MCF 10A (cell line): ENCODE measurements at regions of chr20 and their contacts with region 1.

Region 1: DNA sequence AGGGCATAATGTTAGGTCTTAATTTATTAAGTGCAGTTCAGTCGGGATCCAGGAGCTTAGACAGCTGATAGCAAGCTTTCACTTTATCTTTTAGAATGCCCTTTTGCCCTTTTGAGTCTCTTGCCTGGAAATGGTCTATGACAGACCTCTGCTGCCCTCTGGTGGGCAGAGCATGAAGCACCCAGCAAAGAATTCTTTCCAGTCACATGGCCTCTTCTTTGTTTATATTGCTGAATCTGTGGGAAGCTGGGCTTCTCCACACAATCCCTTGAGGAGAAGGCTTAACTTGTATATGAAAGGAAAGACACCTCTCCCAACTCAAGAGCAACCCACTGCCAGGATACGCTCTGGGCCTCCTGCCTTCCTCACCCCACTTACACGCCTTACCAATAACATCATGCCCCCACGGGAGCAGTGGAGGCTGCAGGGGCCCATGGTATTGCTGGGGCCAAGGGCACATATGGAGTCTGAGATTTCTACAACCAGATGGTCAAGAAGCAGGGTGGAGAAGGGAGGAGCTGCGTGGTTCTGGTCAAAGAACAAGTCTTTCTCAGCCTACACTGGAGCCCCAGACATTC is 20.4 kb downstream of the WFDC3 start:
- DNase-seq: peak; percentile 83
- H3K4me3 Mint-ChIP-seq: no peak overlapping the region
- H3K27ac Mint-ChIP-seq: no peak overlapping the region
- H3K4me1 Mint-ChIP-seq: no peaks in the 10 kb centered on the region
- H3K27me3 Mint-ChIP-seq: peaks cover 11% of the 10 kb centered on the region
- CTCF ChIP-seq: peak; percentile 83

Region 2: GRCh38 chr20:45322952-45323383 is 448.3 kb before region 1 on chr20:
- CTCF ChIA-PET with region 1: interaction called, 158 read pairs
- POLR2A ChIA-PET with region 1: interaction called, 10 read pairs
- intact Hi-C with region 1: loop called (anchors 1 kb)
- DNase-seq: peak; percentile 77
- H3K4me3 Mint-ChIP-seq: no peak overlapping the region
- H3K27ac Mint-ChIP-seq: peak overlapping the region; percentile 59
- H3K4me1 Mint-ChIP-seq: peaks cover 6% of the 10 kb centered on the region
- H3K27me3 Mint-ChIP-seq: no peaks in the 10 kb centered on the region
- CTCF ChIP-seq: peak; percentile 8

Region 3: GRCh38 chr20:45427236-45428149 is 343.8 kb before region 1 on chr20:
- CTCF ChIA-PET with region 1: interaction called, 15 read pairs
- POLR2A ChIA-PET with region 1: no interaction called
- intact Hi-C with region 1: no loop called
- DNase-seq: no peak
- H3K4me3 Mint-ChIP-seq: no peak overlapping the region
- H3K27ac Mint-ChIP-seq: no peak overlapping the region
- H3K4me1 Mint-ChIP-seq: no peaks in the 10 kb centered on the region
- H3K27me3 Mint-ChIP-seq: no peaks in the 10 kb centered on the region
- CTCF ChIP-seq: no peak

Region 4: GRCh38 chr20:45518282-45518681 is 253.0 kb before region 1 on chr20:
- CTCF ChIA-PET with region 1: interaction called, 10 read pairs
- POLR2A ChIA-PET with region 1: interaction called, 5 read pairs
- intact Hi-C with region 1: no loop called
- DNase-seq: peak; percentile 91
- H3K4me3 Mint-ChIP-seq: peak overlapping the region; percentile 21
- H3K27ac Mint-ChIP-seq: peak overlapping the region; percentile 80
- H3K4me1 Mint-ChIP-seq: peaks cover 28% of the 10 kb centered on the region
- H3K27me3 Mint-ChIP-seq: no peaks in the 10 kb centered on the region
- CTCF ChIP-seq: no peak

Region 5: GRCh38 chr20:45564760-45565276 is 206.5 kb before region 1 on chr20:
- CTCF ChIA-PET with region 1: interaction called, 16 read pairs
- POLR2A ChIA-PET with region 1: no interaction called
- intact Hi-C with region 1: no loop called
- DNase-seq: no peak
- H3K4me3 Mint-ChIP-seq: no peak overlapping the region
- H3K27ac Mint-ChIP-seq: no peak overlapping the region
- H3K4me1 Mint-ChIP-seq: no peaks in the 10 kb centered on the region
- H3K27me3 Mint-ChIP-seq: peaks cover 61% of the 10 kb centered on the region
- CTCF ChIP-seq: no peak

Region 6: DNA sequence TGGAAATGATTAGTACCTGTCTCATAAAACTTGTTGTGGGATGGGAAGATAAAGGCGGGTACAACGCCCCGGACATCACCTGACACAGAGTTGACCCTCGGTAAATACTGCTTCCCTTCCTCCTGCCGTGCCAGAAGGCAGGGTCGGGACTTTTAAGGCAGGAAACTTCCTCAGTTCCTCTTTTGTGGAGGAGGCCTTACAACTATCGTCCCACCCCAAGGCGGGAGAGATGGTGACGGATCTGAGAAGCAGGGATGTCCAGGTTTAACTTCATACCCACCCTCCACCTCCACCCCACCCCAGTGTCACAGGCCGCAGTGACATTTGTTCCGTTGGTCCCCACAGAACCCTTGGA is 21.0 kb after region 1 on chr20:
- CTCF ChIA-PET with region 1: interaction called, 11 read pairs
- POLR2A ChIA-PET with region 1: interaction called, 91 read pairs
- intact Hi-C with region 1: no loop called
- DNase-seq: no peak
- H3K4me3 Mint-ChIP-seq: peak overlapping the region; percentile 88
- H3K27ac Mint-ChIP-seq: peak overlapping the region; percentile 99
- H3K4me1 Mint-ChIP-seq: peaks cover 10% of the 10 kb centered on the region
- H3K27me3 Mint-ChIP-seq: no peaks in the 10 kb centered on the region
- CTCF ChIP-seq: no peak

Region 7: DNA sequence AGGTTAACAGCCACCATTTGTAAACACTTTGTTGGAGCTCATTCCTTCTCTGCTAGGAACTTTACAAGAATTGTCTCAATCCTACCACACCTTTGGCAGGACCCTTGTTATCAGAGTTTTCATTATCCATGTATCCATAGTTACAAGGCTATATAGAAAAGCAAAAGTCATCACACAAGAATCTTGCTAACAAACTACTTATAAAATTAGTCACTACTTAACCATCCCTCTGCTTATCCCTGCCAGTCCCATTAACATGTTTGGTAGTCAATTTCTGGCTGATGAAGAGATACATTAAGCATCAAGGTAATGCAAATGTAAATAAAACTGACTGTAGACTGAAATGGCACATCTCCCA is 96.5 kb after region 1 on chr20:
- CTCF ChIA-PET with region 1: no interaction called
- POLR2A ChIA-PET with region 1: no interaction called
- intact Hi-C with region 1: no loop called
- DNase-seq: no peak
- H3K4me3 Mint-ChIP-seq: no peak overlapping the region
- H3K27ac Mint-ChIP-seq: no peak overlapping the region
- H3K4me1 Mint-ChIP-seq: peaks cover 6% of the 10 kb centered on the region
- H3K27me3 Mint-ChIP-seq: no peaks in the 10 kb centered on the region
- CTCF ChIP-seq: no peak